Endothelial cell of umbilical vein (primary cell): ENCODE measurements at regions of chr3 and their contacts with region 1.

Region 1: GRCh38 chr3:112293368-112294321 is at the start of gene SLC9C1:
- DNase-seq: peak; percentile 86
- H3K4me3 ChIP-seq: peak within 1 kb of the TSS; percentile 18 to 51 (median 41)
- H3K27ac ChIP-seq: peak within 1 kb of the TSS; percentile 58
- H3K4me1 ChIP-seq: no peaks in the 10 kb centered on the region
- H3K27me3 ChIP-seq: peaks cover 0 to 4% of the 10 kb centered on the region in 2 experiments
- CTCF ChIP-seq: peak; percentile 51 to 54
- POLR2A ChIP-seq: peak; percentile 15
- total RNA-seq, gene SLC9C1: 0.09 TPM in 1 of 2 replicates, not detected in the other

Region 2: DNA sequence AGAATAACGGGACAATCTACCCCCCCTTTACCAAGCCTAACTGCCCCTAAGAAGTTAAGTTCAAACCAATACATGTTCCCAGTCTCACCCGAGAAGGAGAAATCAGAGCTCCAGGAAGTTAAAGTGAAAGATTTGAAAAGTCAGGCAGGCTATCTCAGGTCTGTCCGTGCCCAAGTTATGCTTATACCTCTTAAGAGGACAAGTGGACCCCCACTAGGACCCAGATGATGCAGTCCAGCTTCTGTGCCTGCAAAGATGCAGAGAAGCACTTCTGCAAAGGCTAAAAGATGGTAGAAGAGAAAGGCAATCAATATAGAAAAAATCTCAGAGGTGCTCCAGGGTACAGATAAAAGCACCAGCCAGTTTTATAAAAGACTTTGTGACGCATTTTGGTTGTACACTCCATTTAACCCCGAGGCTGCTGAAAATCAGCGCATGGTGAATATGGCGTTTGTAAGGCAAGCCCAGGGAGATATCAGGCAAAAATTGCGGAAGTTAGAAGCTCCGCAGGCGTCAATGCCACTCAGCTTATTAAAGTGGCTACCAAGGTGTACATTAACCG is 10.2 kb after region 1 on chr3:
- CTCF ChIA-PET with region 1: interaction called, 64 read pairs
- POLR2A ChIA-PET with region 1: no interaction called
- dilution Hi-C with region 1: no loop called
- intact Hi-C with region 1: no loop called
- DNase-seq: peak; percentile 53
- H3K4me3 ChIP-seq: peak overlapping the region; percentile 11 to 53 (median 43)
- H3K27ac ChIP-seq: no peak overlapping the region
- H3K4me1 ChIP-seq: peaks cover 8% of the 10 kb centered on the region
- H3K27me3 ChIP-seq: no peaks in the 10 kb centered on the region
- CTCF ChIP-seq: no peak
- POLR2A ChIP-seq: no peak

Region 3: GRCh38 chr3:112333002-112333380 is 39.3 kb after region 1 on chr3 and contains the start of gene CD200:
- CTCF ChIA-PET with region 1: interaction called, 12 read pairs
- POLR2A ChIA-PET with region 1: no interaction called
- dilution Hi-C with region 1: no loop called
- intact Hi-C with region 1: no loop called
- DNase-seq: peak; percentile 62
- H3K4me3 ChIP-seq: peak within 1 kb of the TSS; percentile 28 to 59 (median 56)
- H3K27ac ChIP-seq: no peak within 1 kb of the TSS
- H3K4me1 ChIP-seq: peaks cover 8% of the 10 kb centered on the region
- H3K27me3 ChIP-seq: peaks cover 0 to 6% of the 10 kb centered on the region in 2 experiments
- CTCF ChIP-seq: no peak
- POLR2A ChIP-seq: no peak
- total RNA-seq, gene CD200: 7.2 and 8.2 TPM in 2 replicates

Region 4: GRCh38 chr3:112519424-112520001 is 225.9 kb after region 1 on chr3:
- CTCF ChIA-PET with region 1: interaction called, 72 read pairs
- POLR2A ChIA-PET with region 1: no interaction called
- dilution Hi-C with region 1: no loop called
- intact Hi-C with region 1: loop called (anchors 1 kb)
- DNase-seq: peak; percentile 79
- H3K4me3 ChIP-seq: no peak overlapping the region
- H3K27ac ChIP-seq: no peak overlapping the region
- H3K4me1 ChIP-seq: no peaks in the 10 kb centered on the region
- H3K27me3 ChIP-seq: no peaks in the 10 kb centered on the region
- CTCF ChIP-seq: peak; percentile 45 to 52
- POLR2A ChIP-seq: no peak

Region 5: DNA sequence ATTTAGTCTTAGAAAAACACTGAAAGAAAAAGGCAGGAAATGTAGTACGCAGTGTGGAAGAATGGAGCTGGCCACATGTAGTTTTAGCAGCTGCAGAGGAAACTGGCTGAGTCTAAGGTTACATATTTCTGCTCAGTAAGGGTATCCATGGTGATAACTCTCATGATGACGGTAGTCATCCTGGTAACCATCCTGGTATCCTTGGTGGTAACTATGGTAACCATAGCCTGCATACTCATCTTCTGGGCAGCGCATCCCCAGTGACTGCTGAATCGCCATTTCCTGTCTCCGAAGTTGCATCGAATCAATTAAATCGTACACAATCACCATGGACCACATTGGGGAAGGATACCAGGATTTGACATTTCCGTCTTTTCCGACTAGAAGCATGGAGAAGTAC is 311.6 kb after region 1 on chr3:
- CTCF ChIA-PET with region 1: no interaction called
- POLR2A ChIA-PET with region 1: no interaction called
- dilution Hi-C with region 1: no loop called
- intact Hi-C with region 1: loop called (anchors 1 kb)
- DNase-seq: peak; percentile 98
- H3K4me3 ChIP-seq: peak overlapping the region in 1 of 3 experiments; percentile 38
- H3K27ac ChIP-seq: peak overlapping the region; percentile 94
- H3K4me1 ChIP-seq: peaks cover 17% of the 10 kb centered on the region
- H3K27me3 ChIP-seq: no peaks in the 10 kb centered on the region
- CTCF ChIP-seq: no peak
- POLR2A ChIP-seq: no peak